CD4-positive, alpha-beta T cell (primary cell): ENCODE measurements at regions of chr5 and their contacts with region 1.

Region 1: GRCh38 chr5:65933295-65933694 is 6.9 kb downstream of the ERBIN start:
- DNase-seq: no peak
- ATAC-seq: no peak
- H3K4me3 ChIP-seq: no peak overlapping the region
- H3K4me3 Mint-ChIP-seq: peak overlapping the region; percentile 57
- H3K27ac ChIP-seq: no peak overlapping the region
- H3K27ac Mint-ChIP-seq: peak overlapping the region; percentile 74
- H3K4me1 ChIP-seq: peaks cover 28% of the 10 kb centered on the region
- H3K4me1 Mint-ChIP-seq: peaks cover 87% of the 10 kb centered on the region
- H3K27me3 ChIP-seq: no peaks in the 10 kb centered on the region
- H3K27me3 Mint-ChIP-seq: no peaks in the 10 kb centered on the region
- CTCF ChIP-seq: no peak

Region 2: GRCh38 chr5:65624571-65625555 is 308.4 kb before region 1 on chr5 and contains the starts of genes SHLD3 and TRAPPC13:
- CTCF ChIA-PET with region 1: no interaction called
- POLR2A ChIA-PET with region 1: no interaction called
- intact Hi-C with region 1: loop called in 1 of 2 experiments (anchors 5 kb)
- DNase-seq: peak; percentile 67 to 94 (median 76)
- ATAC-seq: peak; percentile 72
- H3K4me3 ChIP-seq: peak within 1 kb of the TSS; percentile 67
- H3K4me3 Mint-ChIP-seq: peak within 1 kb of the TSS; percentile 99
- H3K27ac ChIP-seq: peak within 1 kb of the TSS; percentile 85 to 87
- H3K27ac Mint-ChIP-seq: peak within 1 kb of the TSS; percentile 99
- H3K4me1 ChIP-seq: peaks cover 29% of the 10 kb centered on the region
- H3K4me1 Mint-ChIP-seq: peaks cover 63% of the 10 kb centered on the region
- H3K27me3 ChIP-seq: no peaks in the 10 kb centered on the region
- H3K27me3 Mint-ChIP-seq: no peaks in the 10 kb centered on the region
- CTCF ChIP-seq: peak; percentile 29
- total RNA-seq, gene SHLD3: 11.5 to 11.7 TPM
- total RNA-seq, gene TRAPPC13: 11.2 to 14.4 TPM

Region 3: DNA sequence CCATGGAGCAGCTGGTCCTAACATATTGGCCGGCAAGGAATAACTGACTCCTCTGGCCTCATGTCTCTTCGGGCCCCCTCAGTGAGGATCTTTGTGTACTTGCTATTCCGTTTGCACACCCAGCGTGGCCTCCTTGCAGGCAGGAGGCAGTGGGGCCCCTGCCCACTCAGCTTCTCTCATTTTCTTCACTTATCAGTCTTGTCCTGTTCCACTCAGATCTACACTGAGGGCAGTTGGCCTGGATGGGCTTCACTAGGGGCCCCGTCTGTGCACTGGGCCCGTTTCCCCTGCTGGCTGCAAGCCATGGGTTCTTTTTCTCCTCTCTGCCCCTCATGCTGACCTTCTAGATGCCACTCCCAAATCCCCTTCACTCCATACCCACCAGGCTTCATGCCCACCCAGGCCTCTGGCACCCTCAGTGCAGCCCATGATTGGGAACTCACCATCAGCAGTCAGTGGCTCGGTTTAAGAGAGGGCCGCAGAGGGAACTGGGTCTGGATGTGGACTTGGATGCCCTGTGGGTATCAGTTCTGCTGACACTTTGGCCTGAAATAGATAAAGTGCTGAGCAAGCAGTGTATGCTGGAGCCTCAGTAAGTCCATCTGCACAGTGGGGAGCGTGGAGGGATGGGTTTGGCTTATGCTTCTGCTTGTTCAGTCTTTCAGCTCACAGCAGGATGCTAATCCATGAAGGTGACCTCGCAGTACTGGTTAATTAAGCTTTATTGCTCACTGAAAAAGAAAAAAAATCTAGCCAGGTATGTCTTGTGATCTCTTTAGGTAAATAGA is 51.0 kb after region 1 on chr5:
- CTCF ChIA-PET with region 1: no interaction called
- POLR2A ChIA-PET with region 1: no interaction called
- intact Hi-C with region 1: no loop called
- DNase-seq: no peak
- ATAC-seq: no peak
- H3K4me3 ChIP-seq: no peak overlapping the region
- H3K4me3 Mint-ChIP-seq: no peak overlapping the region
- H3K27ac ChIP-seq: no peak overlapping the region
- H3K27ac Mint-ChIP-seq: peak overlapping the region; percentile 79
- H3K4me1 ChIP-seq: peaks cover 14% of the 10 kb centered on the region
- H3K4me1 Mint-ChIP-seq: peaks cover 78% of the 10 kb centered on the region
- H3K27me3 ChIP-seq: no peaks in the 10 kb centered on the region
- H3K27me3 Mint-ChIP-seq: no peaks in the 10 kb centered on the region
- CTCF ChIP-seq: no peak

Region 4: DNA sequence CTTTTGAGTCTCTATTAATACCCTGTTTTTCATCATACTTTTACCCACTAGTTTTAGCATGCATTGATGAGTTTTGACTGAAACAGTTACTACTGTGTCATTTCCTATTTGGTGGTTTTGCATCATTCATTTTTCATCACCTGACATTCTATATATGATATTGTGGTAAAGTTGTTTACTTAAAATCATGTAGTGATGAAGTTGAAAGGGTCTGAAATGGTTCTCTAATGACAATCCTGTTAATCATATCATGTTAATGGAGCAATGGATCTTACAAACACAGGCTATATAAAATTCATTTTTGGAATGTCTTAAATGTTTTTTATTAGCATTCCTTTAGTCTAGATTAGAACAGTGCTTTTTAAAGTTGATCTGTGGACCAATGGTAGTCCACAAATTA is 77.2 kb after region 1 on chr5:
- CTCF ChIA-PET with region 1: no interaction called
- POLR2A ChIA-PET with region 1: no interaction called
- intact Hi-C with region 1: loop called in 1 of 2 experiments (anchors 5 kb)
- DNase-seq: peak in 3 of 14 experiments; percentile 18 to 49 (median 28)
- ATAC-seq: peak; percentile 93
- H3K4me3 ChIP-seq: no peak overlapping the region
- H3K4me3 Mint-ChIP-seq: peak overlapping the region; percentile 7
- H3K27ac ChIP-seq: no peak overlapping the region
- H3K27ac Mint-ChIP-seq: peak overlapping the region; percentile 90
- H3K4me1 ChIP-seq: peaks cover 2% of the 10 kb centered on the region
- H3K4me1 Mint-ChIP-seq: peaks cover 55% of the 10 kb centered on the region
- H3K27me3 ChIP-seq: no peaks in the 10 kb centered on the region
- H3K27me3 Mint-ChIP-seq: no peaks in the 10 kb centered on the region
- CTCF ChIP-seq: no peak

Region 5: GRCh38 chr5:66680739-66681138 is 747.4 kb after region 1 on chr5:
- CTCF ChIA-PET with region 1: no interaction called
- POLR2A ChIA-PET with region 1: no interaction called
- intact Hi-C with region 1: no loop called
- DNase-seq: no peak
- ATAC-seq: no peak
- H3K4me3 ChIP-seq: no peak overlapping the region
- H3K4me3 Mint-ChIP-seq: no peak overlapping the region
- H3K27ac ChIP-seq: no peak overlapping the region
- H3K27ac Mint-ChIP-seq: no peak overlapping the region
- H3K4me1 ChIP-seq: no peaks in the 10 kb centered on the region
- H3K4me1 Mint-ChIP-seq: no peaks in the 10 kb centered on the region
- H3K27me3 ChIP-seq: no peaks in the 10 kb centered on the region
- H3K27me3 Mint-ChIP-seq: peaks cover 17% of the 10 kb centered on the region
- CTCF ChIP-seq: no peak